BJ (cell line): ENCODE measurements at regions of chr20 and their contacts with region 1.

Region 1: GRCh38 chr20:45044084-45044573 is 56.8 kb downstream of the KCNS1 start:
- DNase-seq: no peak
- H3K4me3 ChIP-seq: no peak overlapping the region
- H3K27me3 ChIP-seq: no peaks in the 10 kb centered on the region
- CTCF ChIP-seq: peak; percentile 87

Region 2: GRCh38 chr20:45011108-45011526 is 33.0 kb before region 1 on chr20:
- CTCF ChIA-PET with region 1: interaction called, 33 read pairs
- POLR2A ChIA-PET with region 1: no interaction called
- DNase-seq: no peak
- H3K4me3 ChIP-seq: no peak overlapping the region
- H3K27me3 ChIP-seq: no peaks in the 10 kb centered on the region
- CTCF ChIP-seq: peak; percentile 71

Region 3: GRCh38 chr20:45104786-45105185 is 60.7 kb after region 1 on chr20:
- CTCF ChIA-PET with region 1: interaction called, 407 read pairs
- POLR2A ChIA-PET with region 1: no interaction called
- DNase-seq: no peak
- H3K4me3 ChIP-seq: no peak overlapping the region
- H3K27me3 ChIP-seq: peaks cover under 1% of the 10 kb centered on the region; the same call in 1 of the 2 replicates
- CTCF ChIP-seq: no peak

Region 4: DNA sequence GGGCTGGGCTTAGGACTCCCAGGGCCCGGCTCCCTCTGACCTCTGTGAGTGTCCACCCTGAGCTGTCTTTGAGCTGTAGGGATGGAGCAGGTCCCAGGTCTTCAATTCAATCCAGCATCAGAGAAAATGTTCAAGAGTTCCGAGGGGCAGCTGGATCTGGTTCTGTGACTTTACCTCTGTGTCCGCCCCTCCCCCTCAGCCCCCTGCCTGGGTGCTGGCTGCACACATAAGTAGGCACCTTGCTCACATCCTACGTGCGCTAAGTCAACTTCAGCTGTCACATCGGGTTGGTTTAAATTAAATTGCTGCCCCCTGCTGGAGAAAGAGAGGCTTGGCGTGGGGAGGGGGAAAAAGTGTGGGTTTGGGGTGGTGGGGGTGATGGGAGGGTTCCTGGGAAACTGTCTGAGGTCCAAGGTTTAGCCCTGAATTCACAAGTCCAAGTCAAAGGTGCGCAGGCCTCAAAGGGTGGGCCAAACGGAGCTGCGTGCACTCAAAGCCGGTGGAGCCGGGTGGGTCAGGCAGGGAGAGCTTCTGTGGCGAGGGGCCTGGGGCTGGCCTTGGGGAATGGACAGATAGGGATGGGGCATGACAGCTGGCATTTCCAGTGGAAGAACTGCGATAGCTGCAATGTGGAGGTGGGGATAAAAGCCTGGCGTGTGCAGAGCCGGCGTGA is 67.8 kb after region 1 on chr20:
- CTCF ChIA-PET with region 1: interaction called, 59 read pairs
- POLR2A ChIA-PET with region 1: no interaction called
- DNase-seq: no peak
- H3K4me3 ChIP-seq: no peak overlapping the region
- H3K27me3 ChIP-seq: peaks cover 14% of the 10 kb centered on the region
- CTCF ChIP-seq: peak; percentile 62

Region 5: GRCh38 chr20:45685896-45686295 is 641.8 kb after region 1 on chr20:
- CTCF ChIA-PET with region 1: no interaction called
- POLR2A ChIA-PET with region 1: no interaction called
- DNase-seq: no peak
- H3K4me3 ChIP-seq: no peak overlapping the region
- H3K27me3 ChIP-seq: no peaks in the 10 kb centered on the region
- CTCF ChIP-seq: no peak; the same call in 1 of the 2 replicates